ENCODE measurements at regions of chr3 and their contacts with region 1.

Region 1: DNA sequence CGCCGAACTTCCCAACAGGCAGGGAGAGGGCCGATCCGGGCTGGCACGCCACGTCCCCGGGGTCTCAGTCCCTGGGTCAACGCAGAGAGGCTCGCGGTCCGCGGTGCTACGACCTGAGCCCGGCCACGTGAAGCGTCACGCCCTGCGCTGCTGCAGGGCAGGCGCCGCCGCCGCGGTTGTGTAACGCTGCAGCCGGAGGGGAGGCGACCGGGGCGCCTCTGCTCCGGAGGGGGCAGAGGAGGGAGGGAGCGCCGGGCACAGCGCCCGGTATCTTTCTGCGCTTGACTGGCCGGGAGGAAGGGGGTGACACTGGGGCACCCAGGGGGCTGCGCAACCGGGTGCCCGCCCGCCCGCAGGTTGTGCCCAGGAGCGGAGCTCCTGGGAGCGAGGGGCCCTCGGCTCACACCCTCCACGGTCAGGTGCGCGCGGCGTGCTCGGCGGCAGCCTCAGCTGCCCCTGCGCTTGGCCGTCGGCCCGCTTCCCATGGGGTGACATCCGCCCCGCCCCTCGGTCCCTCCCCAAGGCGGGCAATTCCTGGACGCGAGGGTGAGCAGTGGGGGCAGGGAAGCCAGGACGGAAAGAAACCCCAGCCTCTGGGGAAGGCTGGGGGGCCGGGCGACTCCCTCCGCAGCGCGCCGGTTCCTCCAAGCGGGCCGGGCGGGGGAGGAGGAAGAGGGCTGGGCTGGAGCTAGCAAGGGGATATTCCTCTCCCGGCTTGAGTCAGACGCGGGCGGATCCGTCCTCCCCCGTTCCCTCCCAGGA is 852 bp upstream of the BHLHE40 start:
- DNase-seq: peak; percentile 99
- ATAC-seq: peak; percentile 86 to 88
- H3K4me3 ChIP-seq: peak overlapping the region; percentile 64
- H3K27ac ChIP-seq: peak overlapping the region; percentile 99
- H3K4me1 ChIP-seq: peaks cover 2% of the 10 kb centered on the region
- H3K27me3 ChIP-seq: no peaks in the 10 kb centered on the region

Region 2: GRCh38 chr3:4722103-4722502 is 256.3 kb before region 1 on chr3:
- intact Hi-C with region 1: loop called in 3 of 4 experiments (anchors 5 kb)
- DNase-seq: peak; percentile 57 to 80 (median 69)
- ATAC-seq: peak; percentile 76 to 78
- H3K4me3 ChIP-seq: no peak overlapping the region
- H3K27ac ChIP-seq: peak overlapping the region; percentile 39
- H3K4me1 ChIP-seq: no peaks in the 10 kb centered on the region
- H3K27me3 ChIP-seq: no peaks in the 10 kb centered on the region

Region 3: DNA sequence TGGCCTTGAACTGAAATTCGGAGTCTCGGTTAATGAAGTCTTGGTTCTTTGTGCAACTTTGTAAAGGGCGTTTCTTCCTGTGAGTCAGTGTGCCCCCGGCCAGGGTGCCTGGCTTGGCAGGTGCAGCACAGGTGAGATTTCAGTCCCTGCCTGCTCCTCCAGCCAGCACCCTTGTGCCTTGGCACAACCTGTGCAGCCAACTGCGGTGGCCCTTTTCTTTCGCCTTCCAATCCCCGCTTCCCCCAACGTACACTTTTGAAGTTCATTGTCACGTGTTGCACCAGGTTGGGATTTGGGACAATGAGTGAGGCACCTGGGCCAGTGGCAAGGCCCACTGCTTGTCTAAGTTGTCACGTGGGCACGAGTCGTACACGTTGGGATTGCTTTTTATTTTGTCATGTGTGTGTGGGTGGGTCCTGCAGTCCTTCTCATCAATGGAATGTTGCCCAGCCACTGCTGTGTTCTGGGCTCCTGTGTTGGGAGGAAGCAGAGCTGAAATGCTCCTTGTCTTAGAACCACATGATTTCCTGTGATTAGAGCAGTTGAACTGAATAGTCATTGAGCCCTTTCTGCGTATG is 242.0 kb before region 1 on chr3:
- intact Hi-C with region 1: loop called in 2 of 4 experiments (anchors 5 to 10 kb)
- DNase-seq: peak in 1 of 3 donors; percentile 67
- ATAC-seq: peak; percentile 47 to 63
- H3K4me3 ChIP-seq: no peak overlapping the region
- H3K27ac ChIP-seq: peak overlapping the region; percentile 9
- H3K4me1 ChIP-seq: peaks cover 18% of the 10 kb centered on the region
- H3K27me3 ChIP-seq: no peaks in the 10 kb centered on the region

Region 4: DNA sequence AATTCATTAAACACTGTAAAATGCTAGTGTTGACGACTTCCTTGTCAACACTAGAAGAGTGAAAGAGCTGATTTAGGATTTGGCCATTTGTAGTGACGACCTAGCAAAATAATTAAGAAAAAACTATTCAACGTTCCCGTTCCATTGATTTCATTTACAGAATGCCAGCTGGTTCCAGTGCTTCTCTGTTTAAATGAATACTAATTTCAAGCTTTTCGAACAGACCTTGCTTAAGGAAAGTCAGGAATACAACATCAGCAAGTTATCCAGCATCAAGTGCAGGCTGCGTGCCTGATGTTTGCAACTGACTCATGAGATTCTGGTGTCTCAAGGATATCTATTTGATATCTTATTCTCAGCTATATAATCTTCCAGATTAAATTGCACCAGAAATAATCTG is 97.5 kb before region 1 on chr3:
- intact Hi-C with region 1: no loop called
- DNase-seq: no peak
- ATAC-seq: no peak
- H3K4me3 ChIP-seq: no peak overlapping the region
- H3K27ac ChIP-seq: no peak overlapping the region
- H3K4me1 ChIP-seq: no peaks in the 10 kb centered on the region
- H3K27me3 ChIP-seq: no peaks in the 10 kb centered on the region

Region 5: DNA sequence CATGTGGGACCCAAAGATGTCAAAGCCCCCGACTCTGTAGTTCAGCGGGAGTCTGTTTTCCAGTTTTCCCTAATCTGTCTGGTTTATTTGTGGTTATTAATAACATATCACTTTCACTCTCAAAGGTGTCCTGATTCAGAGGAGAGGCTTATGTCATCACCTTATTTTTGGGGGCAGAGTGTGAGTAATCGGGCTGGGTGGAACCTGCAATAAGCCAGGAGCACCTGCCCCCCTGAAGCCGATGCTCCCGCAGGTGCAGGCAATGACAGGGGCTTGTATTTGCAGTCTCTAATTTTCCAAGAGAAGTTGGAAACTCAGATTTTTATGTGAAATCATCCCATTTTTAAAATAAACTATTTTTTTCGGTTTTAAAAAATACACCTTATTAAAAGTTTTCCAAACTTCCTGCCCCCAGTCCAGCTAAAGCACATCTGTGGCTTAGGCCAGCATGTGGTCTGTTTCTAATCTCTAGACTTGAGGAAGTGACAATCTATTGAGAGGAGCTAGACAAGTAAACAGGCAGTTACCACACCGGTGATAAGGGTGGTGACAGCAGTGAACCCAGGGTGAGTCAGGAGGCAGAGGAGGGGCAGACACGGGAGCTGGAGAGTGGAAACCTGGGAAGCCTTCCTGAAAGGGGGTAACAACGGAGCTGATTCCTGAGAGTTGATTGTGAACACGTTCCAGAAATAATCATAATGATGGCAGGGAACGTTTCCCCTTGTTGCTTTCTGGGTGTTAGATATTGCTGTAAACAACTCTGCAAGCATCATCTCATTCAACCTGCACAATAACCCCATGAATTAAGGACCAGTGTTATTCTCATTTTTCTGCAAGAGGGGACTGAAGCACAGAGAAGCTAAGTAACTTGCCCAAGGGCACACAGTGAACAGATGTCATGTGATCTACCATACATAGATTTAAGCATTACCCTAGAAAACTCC is 38.1 kb after region 1 on chr3:
- intact Hi-C with region 1: loop called in 2 of 4 experiments (anchors 5 kb)
- DNase-seq: peak; percentile 57 to 63 (median 59)
- ATAC-seq: peak; percentile 60 to 81
- H3K4me3 ChIP-seq: no peak overlapping the region
- H3K27ac ChIP-seq: no peak overlapping the region
- H3K4me1 ChIP-seq: peaks cover 16% of the 10 kb centered on the region
- H3K27me3 ChIP-seq: no peaks in the 10 kb centered on the region

Region 6: DNA sequence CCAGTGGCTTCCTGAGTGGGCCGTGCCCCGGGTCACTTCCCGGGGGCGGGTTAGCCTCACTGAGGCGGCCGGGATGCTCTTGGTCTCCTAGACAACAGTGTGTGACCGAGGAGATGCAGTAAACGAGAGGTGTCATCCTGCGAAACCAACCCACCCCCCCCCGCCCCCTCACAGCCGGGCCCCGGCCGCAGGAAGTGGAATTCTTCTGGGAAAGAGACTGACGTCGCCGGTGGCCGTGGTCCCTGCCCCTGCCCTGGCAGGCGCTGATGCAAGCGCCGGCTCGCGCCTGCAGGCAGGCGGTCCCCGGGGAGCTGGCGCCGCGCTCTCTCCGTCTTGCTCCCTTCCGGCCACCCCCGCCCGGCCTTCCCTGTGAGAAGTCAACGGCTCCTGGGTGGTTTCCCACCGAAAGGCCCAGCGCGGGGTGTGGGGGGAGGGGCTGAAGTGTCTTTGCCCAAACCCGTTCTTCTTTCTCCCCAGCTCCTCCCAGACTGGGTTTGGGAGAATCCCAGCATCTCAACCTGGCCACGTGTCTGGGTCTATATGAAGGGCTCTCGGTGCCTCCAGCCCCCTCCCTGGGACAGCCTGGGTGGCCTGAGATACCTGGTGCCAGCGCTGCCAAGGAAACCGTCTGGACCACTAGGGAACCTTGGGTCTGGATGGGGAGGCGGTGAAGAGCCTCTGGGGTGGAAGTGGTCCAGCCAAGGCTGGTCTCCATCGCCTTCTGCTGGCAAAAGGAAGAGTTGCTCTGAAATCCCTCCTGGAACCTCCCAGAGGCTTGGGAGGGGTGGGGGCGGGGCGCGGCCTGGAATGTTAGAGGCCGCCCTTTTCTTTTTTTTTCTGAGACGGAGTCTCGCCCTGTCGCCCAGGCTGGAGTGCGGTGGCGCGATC is 48.2 kb after region 1 on chr3:
- intact Hi-C with region 1: loop called in 2 of 4 experiments (anchors 5 kb)
- DNase-seq: peak; percentile 97
- ATAC-seq: peak; percentile 94 to 95
- H3K4me3 ChIP-seq: peak overlapping the region; percentile 39
- H3K27ac ChIP-seq: peak overlapping the region; percentile 90
- H3K4me1 ChIP-seq: no peaks in the 10 kb centered on the region
- H3K27me3 ChIP-seq: no peaks in the 10 kb centered on the region

Region 7: DNA sequence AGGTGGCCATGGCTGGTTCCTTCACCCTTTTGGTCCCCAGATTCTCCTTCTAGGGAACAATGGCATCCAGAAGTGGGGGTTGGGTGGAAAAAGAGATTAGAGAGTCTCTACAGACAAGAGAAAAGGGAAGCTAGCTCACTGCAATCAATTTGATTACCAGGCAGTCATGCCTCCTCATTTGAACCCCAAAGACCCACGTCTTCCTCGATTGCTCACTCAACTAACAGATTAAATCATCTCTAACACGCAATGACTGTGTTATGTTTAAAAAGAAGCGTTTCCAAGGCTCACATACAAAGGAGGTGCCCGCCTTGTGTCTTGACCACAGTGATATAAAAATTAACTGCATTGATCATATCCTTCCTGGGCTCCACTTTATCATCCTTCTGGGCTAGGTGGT is 58.5 kb after region 1 on chr3:
- intact Hi-C with region 1: no loop called
- DNase-seq: no peak
- ATAC-seq: no peak
- H3K4me3 ChIP-seq: no peak overlapping the region
- H3K27ac ChIP-seq: no peak overlapping the region
- H3K4me1 ChIP-seq: no peaks in the 10 kb centered on the region
- H3K27me3 ChIP-seq: no peaks in the 10 kb centered on the region

Region 8: GRCh38 chr3:5264087-5264600 is 285.8 kb after region 1 on chr3:
- intact Hi-C with region 1: no loop called
- DNase-seq: no peak
- ATAC-seq: no peak
- H3K4me3 ChIP-seq: no peak overlapping the region
- H3K27ac ChIP-seq: no peak overlapping the region
- H3K4me1 ChIP-seq: no peaks in the 10 kb centered on the region
- H3K27me3 ChIP-seq: no peaks in the 10 kb centered on the region